A549 (cell line): ENCODE measurements at regions of chr19 and their contacts with region 1.

Region 1: DNA sequence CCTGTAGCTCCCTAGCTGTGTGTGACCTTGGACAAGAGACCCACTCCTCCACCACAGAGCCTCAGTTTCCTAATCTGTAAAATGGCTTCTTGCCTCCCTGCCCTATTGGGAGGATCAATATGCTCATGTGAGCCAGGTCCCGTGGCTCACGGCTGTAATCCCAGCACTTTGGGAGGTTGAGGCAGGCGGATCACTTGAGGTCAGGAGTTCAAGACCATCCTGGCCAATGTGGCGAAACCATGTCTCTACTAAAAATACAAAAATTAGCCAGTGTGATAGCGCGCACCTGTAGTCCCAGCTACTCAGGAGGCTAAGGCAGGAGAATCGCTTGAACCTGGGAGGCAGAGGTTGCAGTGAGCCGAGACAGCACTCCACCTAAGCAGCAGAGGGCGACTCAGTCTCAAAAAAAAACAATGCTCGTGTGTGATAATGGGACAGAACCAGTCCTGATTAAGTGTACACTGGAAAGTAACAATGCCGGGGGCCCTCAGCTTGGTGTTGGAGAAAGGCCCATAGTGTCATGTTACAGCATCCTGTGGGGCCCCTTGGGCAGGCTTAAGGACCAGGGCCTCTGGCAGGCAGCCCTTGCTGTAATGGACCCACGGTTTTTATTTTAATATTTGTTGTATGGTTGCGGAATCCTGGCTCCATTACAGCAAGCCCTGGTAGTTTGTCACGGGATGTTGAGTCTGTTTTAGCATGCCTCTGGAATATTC is 6.8 kb downstream of the RPS11 start:
- DNase-seq: peak; percentile 69 to 79
- ATAC-seq: peak; percentile 61 to 71
- H3K4me3 ChIP-seq: no peak overlapping the region
- H3K27ac ChIP-seq: no peak overlapping the region
- H3K4me1 ChIP-seq: peaks cover 24% of the 10 kb centered on the region
- CTCF ChIP-seq: peak; percentile 88
- EP300 ChIP-seq: no peak
- POLR2A ChIP-seq: no peak
- RAD21 ChIP-seq: peak; percentile 86 to 88

Region 2: DNA sequence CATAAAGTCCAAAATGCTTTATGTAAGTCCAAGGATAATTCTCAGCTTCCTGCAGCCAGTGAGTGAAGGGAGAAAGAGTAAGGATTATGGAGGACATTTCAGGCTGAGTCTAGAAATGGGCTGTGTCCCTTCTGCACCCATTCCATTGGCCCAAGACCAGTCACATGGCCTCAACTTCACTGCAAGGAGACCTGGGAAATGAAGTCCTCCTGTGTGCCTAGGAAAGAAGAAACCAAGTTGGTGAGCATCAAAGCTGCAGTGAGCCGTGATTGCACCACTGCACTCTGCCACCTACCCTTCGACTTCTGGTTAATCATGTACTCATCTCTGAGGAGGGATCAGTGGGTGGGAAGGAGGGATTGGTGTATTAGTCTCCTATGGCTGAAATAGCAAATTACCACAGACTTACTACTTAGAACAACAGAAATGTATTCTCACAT is 171.4 kb before region 1 on chr19:
- CTCF ChIA-PET with region 1: no interaction called
- POLR2A ChIA-PET with region 1: no interaction called
- DNase-seq: peak; percentile 60 to 77
- ATAC-seq: peak; percentile 84 to 91
- H3K4me3 ChIP-seq: no peak overlapping the region
- H3K27ac ChIP-seq: no peak overlapping the region
- H3K4me1 ChIP-seq: no peaks in the 10 kb centered on the region
- CTCF ChIP-seq: no peak
- EP300 ChIP-seq: no peak
- POLR2A ChIP-seq: no peak
- RAD21 ChIP-seq: no peak

Region 3: DNA sequence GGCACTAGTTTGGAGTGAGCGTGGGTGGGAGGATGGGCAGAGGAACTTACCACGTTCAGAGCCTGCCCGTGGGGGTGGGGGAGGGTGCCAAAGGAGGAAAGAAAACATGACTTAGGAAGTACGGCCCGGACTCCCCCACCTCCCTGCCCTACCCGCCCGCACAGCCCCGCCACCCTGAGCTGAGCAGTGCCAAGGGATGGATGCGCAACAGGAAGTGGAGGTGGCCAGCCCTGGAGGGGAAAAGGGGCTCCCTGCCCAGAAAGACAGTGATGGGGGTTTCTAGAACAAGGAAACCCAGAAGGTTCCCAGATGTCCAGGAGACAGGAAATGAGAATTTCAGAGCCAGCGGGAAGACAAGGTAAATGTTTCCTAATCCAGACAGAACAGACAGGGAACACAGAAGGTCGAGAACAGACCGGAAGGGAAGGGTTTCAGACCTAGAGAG is 147.1 kb before region 1 on chr19:
- CTCF ChIA-PET with region 1: no interaction called
- POLR2A ChIA-PET with region 1: no interaction called
- DNase-seq: no peak
- ATAC-seq: no peak
- H3K4me3 ChIP-seq: no peak overlapping the region
- H3K27ac ChIP-seq: peak overlapping the region in 1 of 2 experiments; percentile 12; a peak in 1 of 6 replicates
- H3K4me1 ChIP-seq: peaks cover 9% of the 10 kb centered on the region; the same call in 2 of the 3 replicates
- CTCF ChIP-seq: no peak
- EP300 ChIP-seq: no peak
- POLR2A ChIP-seq: no peak
- RAD21 ChIP-seq: no peak

Region 4: DNA sequence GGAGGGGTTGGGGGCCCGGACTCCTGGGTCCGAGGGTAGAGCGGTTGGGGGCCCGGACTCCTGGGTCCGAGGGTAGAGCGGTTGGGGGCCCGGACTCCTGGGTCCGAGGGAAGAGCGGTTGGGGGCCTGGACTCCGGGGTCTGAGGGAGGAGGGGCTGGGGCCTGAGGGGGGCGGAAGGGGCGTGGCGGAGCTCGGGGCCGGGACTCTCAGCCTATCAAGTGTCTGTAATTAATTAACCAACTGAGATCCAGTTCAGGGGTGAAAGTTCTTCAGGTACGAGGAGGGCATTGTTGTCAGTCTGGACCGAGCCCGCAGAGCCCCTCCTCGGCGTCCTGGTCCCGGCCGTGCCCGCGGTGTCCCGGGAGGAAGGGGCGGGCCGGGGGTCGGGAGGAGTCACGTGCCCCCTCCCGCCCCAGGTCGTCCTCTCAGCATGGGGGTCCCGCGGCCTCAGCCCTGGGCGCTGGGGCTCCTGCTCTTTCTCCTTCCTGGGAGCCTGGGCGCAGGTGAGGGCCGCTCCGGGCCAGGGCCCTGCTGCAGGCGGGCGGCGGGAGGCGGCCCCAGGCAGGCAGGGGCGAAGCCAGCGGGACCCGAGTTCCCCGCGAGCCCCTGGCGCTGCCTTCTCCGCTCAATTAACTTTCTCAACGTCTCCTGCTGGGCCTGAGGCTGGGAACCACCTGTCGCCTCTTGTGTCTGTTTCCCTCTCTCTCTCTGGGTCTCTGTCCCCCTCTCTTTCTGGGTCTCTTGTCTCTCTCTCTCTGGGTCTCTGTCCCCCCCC is 10.1 kb after region 1 on chr19:
- CTCF ChIA-PET with region 1: interaction called, 21 read pairs
- POLR2A ChIA-PET with region 1: no interaction called
- DNase-seq: no peak
- ATAC-seq: peak; percentile 71 to 78
- H3K4me3 ChIP-seq: peak overlapping the region; percentile 82
- H3K27ac ChIP-seq: peak overlapping the region; percentile 85 to 94
- H3K4me1 ChIP-seq: peaks cover 15% of the 10 kb centered on the region
- CTCF ChIP-seq: no peak
- EP300 ChIP-seq: no peak
- POLR2A ChIP-seq: no peak
- RAD21 ChIP-seq: no peak

Region 5: DNA sequence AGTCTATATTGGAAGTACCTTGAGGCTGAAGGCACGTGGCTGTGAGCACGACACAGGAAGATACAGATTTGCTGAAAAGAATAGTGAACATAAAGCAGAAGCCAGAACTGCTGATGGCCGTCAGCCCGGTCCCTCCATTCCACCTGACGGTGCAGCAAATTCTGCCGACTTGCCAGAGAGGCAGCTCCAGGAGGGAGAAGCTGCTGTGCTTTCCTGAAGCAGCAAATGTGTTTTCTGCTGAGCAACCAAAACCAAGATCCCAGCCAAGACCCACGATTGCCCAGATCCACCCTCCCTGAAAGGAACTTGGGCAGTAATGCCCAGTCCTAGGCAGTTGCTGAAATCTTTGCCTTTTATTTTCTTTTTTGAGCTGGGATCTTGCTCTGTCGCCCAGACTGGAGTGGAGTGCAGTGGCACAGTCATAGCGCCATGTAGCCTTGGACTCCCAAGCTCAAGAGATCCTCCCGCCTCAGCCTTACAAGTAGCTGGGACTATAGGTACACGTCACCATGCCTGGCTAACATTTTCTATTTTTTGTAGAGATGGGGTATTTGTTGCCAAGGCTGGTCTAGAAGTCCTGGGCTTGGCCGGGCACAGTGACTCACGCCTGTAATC is 17.8 kb after region 1 on chr19:
- CTCF ChIA-PET with region 1: interaction called, 21 read pairs
- POLR2A ChIA-PET with region 1: no interaction called
- DNase-seq: no peak
- ATAC-seq: peak in 1 of 2 experiments; percentile 25; a peak in 3 of 6 replicates
- H3K4me3 ChIP-seq: no peak overlapping the region
- H3K27ac ChIP-seq: no peak overlapping the region
- H3K4me1 ChIP-seq: no peaks in the 10 kb centered on the region
- CTCF ChIP-seq: no peak
- EP300 ChIP-seq: no peak
- POLR2A ChIP-seq: no peak
- RAD21 ChIP-seq: no peak

Region 6: GRCh38 chr19:49580264-49581006 is 77.4 kb after region 1 on chr19 and contains the start of gene NOSIP:
- CTCF ChIA-PET with region 1: interaction called, 201 read pairs
- POLR2A ChIA-PET with region 1: no interaction called
- DNase-seq: peak; percentile 94 to 99
- ATAC-seq: peak; percentile 98 to 99
- H3K4me3 ChIP-seq: peak within 1 kb of the TSS; percentile 63
- H3K27ac ChIP-seq: peak within 1 kb of the TSS; percentile 68 to 88
- H3K4me1 ChIP-seq: peaks cover 8% of the 10 kb centered on the region; the same call in 2 of the 3 replicates
- CTCF ChIP-seq: no peak
- EP300 ChIP-seq: no peak
- POLR2A ChIP-seq: peak; percentile 99
- RAD21 ChIP-seq: 0 out of 5 replicates have a peak, but pooled peaks of 1 of the 2 experiments have one; percentile 4
- polyA plus RNA-seq, gene NOSIP: 49.0 and 52.5 TPM in 2 replicates

Region 7: DNA sequence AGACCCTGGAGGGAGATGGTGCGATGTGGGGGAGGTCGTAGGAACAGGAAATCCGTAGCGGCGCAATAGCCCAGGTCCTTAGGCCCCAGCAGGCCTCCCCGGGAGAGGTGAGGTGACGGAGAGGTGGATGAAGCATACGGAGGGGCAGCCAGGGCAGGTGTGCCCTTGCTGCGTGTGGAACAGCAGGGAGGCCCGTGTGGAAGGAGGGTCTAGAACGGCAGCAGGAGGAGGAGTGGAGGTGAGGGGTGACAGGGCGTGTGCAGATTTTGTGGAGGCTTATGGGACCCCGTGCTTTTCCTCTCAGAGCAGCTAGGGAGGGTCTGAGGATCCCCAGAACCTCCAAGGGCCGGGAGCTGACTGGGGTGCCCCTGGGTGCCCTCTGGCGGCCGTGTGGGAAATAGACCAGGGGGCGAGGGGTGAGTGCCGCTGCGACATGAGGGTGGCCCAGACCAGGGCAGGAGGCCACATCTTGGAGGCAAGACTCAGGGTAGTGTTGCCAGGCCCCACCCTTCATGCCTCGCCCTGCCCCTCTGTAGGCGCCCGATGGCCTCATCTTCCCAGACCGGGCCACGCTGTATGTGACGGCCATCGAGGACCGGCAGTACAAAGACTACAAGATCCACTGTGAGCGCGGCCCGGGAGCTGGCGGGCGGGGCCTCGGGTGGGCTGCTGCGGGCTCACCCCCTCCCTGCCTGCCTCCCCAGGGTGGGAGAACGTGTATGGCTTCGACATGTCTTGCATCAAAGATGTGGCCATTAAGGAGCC is 181.4 kb after region 1 on chr19:
- CTCF ChIA-PET with region 1: interaction called, 14 read pairs
- POLR2A ChIA-PET with region 1: no interaction called
- DNase-seq: peak; percentile 57 to 75
- ATAC-seq: peak; percentile 50 to 70
- H3K4me3 ChIP-seq: no peak overlapping the region
- H3K27ac ChIP-seq: 0 out of 6 replicates have a peak overlapping the region, but pooled peaks of 1 of the 2 experiments have one; percentile 2
- H3K4me1 ChIP-seq: peaks cover 27% of the 10 kb centered on the region
- CTCF ChIP-seq: peak; percentile 65
- EP300 ChIP-seq: no peak
- POLR2A ChIP-seq: no peak
- RAD21 ChIP-seq: peak in 1 of 2 experiments; percentile 17; a peak in 1 of 5 replicates

Region 8: GRCh38 chr19:49701271-49701786 is 198.3 kb after region 1 on chr19:
- CTCF ChIA-PET with region 1: no interaction called
- POLR2A ChIA-PET with region 1: no interaction called
- DNase-seq: no peak
- ATAC-seq: peak; percentile 57 to 73
- H3K4me3 ChIP-seq: peak overlapping the region; percentile 31
- H3K27ac ChIP-seq: peak overlapping the region in 1 of 2 experiments; percentile 66; a peak in 3 of 6 replicates
- H3K4me1 ChIP-seq: peaks cover 6% of the 10 kb centered on the region; the same call in 1 of the 3 replicates
- CTCF ChIP-seq: 0 out of 3 replicates have a peak, but pooled peaks have one; percentile 9
- EP300 ChIP-seq: no peak
- POLR2A ChIP-seq: no peak
- RAD21 ChIP-seq: 0 out of 5 replicates have a peak, but pooled peaks of 1 of the 2 experiments have one; percentile 16